ENCODE measurements at regions of chr6 and their contacts with region 1.

Region 1: GRCh38 chr6:106300944-106301343 is 24.6 kb downstream of the ATG5 start:
- DNase-seq: peak in 5 of 9 donors; percentile 4 to 22 (median 19)
- ATAC-seq: no peak
- H3K4me3 ChIP-seq: no peak overlapping the region
- H3K4me3 Mint-ChIP-seq: peak overlapping the region in 1 of 10 donors; percentile 10
- H3K27ac ChIP-seq: no peak overlapping the region
- H3K27ac Mint-ChIP-seq: no peak overlapping the region
- H3K4me1 ChIP-seq: no peaks in the 10 kb centered on the region
- H3K4me1 Mint-ChIP-seq: peaks cover 4 to 32% (median 12%) of the 10 kb centered on the region in 7 donors
- H3K27me3 ChIP-seq: no peaks in the 10 kb centered on the region
- H3K27me3 Mint-ChIP-seq: no peaks in the 10 kb centered on the region

Region 2: GRCh38 chr6:105087571-105088211 is 1213.3 kb before region 1 on chr6:
- CTCF ChIA-PET with region 1: no interaction called
- POLR2A ChIA-PET with region 1: no interaction called
- intact Hi-C with region 1: loop called (anchors 5 to 10 kb)
- DNase-seq: peak in 6 of 9 donors; percentile 11 to 43 (median 32)
- ATAC-seq: peak; percentile 67
- H3K4me3 ChIP-seq: no peak overlapping the region
- H3K4me3 Mint-ChIP-seq: no peak overlapping the region
- H3K27ac ChIP-seq: no peak overlapping the region
- H3K27ac Mint-ChIP-seq: no peak overlapping the region
- H3K4me1 ChIP-seq: no peaks in the 10 kb centered on the region
- H3K4me1 Mint-ChIP-seq: no peaks in the 10 kb centered on the region
- H3K27me3 ChIP-seq: no peaks in the 10 kb centered on the region
- H3K27me3 Mint-ChIP-seq: peaks cover 4 to 10% (median 6%) of the 10 kb centered on the region in 5 donors

Region 3: GRCh38 chr6:105431226-105431625 is 869.7 kb before region 1 on chr6:
- CTCF ChIA-PET with region 1: interaction called, 8 read pairs
- POLR2A ChIA-PET with region 1: no interaction called
- intact Hi-C with region 1: loop called (anchors 1 kb)
- DNase-seq: peak in 6 of 9 donors; percentile 4 to 43 (median 34)
- ATAC-seq: no peak
- H3K4me3 ChIP-seq: no peak overlapping the region
- H3K4me3 Mint-ChIP-seq: no peak overlapping the region
- H3K27ac ChIP-seq: no peak overlapping the region
- H3K27ac Mint-ChIP-seq: no peak overlapping the region
- H3K4me1 ChIP-seq: no peaks in the 10 kb centered on the region
- H3K4me1 Mint-ChIP-seq: peaks cover 0 to 3% (median 0%) of the 10 kb centered on the region in 7 donors
- H3K27me3 ChIP-seq: no peaks in the 10 kb centered on the region
- H3K27me3 Mint-ChIP-seq: peaks cover 0 to 36% (median 7%) of the 10 kb centered on the region in 5 donors

Region 4: DNA sequence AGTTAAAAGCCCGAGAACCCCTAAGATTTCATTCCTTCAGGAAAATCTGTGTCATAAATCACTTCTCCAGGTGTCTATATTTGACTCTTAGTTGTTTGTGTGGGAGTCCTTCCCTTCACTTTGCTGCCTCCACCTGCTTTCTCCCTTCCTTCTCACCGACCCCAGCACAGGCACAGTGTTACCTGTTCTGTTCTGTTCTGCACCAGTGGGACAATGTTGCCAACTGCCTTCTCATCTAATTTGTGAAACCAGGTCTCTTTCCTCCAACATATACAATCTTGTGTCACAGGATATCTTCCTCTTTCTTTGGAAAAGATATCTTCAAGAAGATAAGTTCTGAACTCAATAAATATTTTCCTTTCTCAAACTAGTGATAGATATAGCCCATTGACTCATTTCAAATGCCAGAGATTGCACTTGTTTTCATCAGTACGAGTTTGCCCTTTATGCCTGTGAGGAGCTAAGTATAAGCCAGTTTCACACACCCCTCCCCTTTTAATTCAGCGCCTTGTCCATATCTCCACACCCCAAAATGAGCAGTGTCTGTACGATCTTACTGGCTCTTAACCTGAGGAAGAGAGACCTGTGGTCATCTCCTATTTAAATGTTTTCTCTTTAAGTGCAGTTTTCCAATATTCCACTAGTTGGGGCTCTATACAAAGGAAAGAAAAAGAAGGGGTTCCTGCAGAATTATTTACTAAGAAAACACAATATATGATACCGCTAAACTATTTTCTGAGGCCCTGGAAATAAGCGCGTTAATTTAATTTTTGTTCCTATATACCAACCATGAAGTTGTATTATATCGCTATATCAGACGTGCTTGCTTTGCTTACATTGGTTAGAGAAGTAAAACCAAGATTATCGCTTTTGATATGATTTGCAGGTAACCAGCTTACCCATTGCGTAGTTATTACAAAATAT is 816.4 kb before region 1 on chr6:
- CTCF ChIA-PET with region 1: no interaction called
- POLR2A ChIA-PET with region 1: no interaction called
- intact Hi-C with region 1: loop called (anchors 1 kb)
- DNase-seq: peak in 5 of 9 donors; percentile 7 to 36 (median 20)
- ATAC-seq: peak; percentile 59
- H3K4me3 ChIP-seq: no peak overlapping the region
- H3K4me3 Mint-ChIP-seq: no peak overlapping the region
- H3K27ac ChIP-seq: no peak overlapping the region
- H3K27ac Mint-ChIP-seq: peak overlapping the region in 2 of 9 donors; percentile 20 to 52
- H3K4me1 ChIP-seq: peaks cover 0 to 35% of the 10 kb centered on the region in 2 donors
- H3K4me1 Mint-ChIP-seq: peaks cover 0 to 63% (median 0%) of the 10 kb centered on the region in 7 donors
- H3K27me3 ChIP-seq: no peaks in the 10 kb centered on the region
- H3K27me3 Mint-ChIP-seq: peaks cover 11 to 16% (median 13%) of the 10 kb centered on the region in 5 donors

Region 5: GRCh38 chr6:105733565-105734162 is 567.3 kb before region 1 on chr6:
- CTCF ChIA-PET with region 1: no interaction called
- POLR2A ChIA-PET with region 1: no interaction called
- intact Hi-C with region 1: loop called (anchors 1 to 2 kb)
- DNase-seq: peak in 6 of 9 donors; percentile 10 to 41 (median 34)
- ATAC-seq: no peak
- H3K4me3 ChIP-seq: no peak overlapping the region
- H3K4me3 Mint-ChIP-seq: no peak overlapping the region
- H3K27ac ChIP-seq: no peak overlapping the region
- H3K27ac Mint-ChIP-seq: no peak overlapping the region
- H3K4me1 ChIP-seq: no peaks in the 10 kb centered on the region
- H3K4me1 Mint-ChIP-seq: peaks cover 0 to 36% (median 8%) of the 10 kb centered on the region in 7 donors
- H3K27me3 ChIP-seq: no peaks in the 10 kb centered on the region
- H3K27me3 Mint-ChIP-seq: peaks cover 0 to 8% (median 0%) of the 10 kb centered on the region in 5 donors

Region 6: DNA sequence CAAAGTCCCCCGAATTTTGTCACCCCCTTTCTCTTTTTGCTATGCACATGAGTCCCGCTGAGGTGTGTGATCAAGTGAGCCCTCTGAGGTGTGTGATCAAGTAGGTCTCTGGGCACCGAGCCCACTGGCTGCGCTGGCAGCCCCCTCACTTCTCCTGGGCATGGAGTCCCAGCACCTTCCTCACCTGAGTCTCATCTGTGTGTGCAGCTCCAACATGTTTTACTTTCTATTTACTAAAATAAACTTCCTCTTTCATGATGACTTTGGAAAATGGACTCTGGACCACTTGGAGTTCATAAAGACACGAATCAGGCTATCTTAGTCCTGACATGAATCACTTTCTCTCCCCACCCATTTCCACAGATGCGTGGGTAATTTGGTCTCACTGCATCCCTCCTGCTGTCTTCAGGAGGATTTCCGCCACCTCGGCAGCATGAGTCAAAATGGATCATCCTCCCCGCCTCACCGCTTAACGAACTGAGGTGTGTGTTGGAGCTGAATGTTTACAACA is 175.0 kb before region 1 on chr6:
- CTCF ChIA-PET with region 1: no interaction called
- POLR2A ChIA-PET with region 1: no interaction called
- intact Hi-C with region 1: no loop called
- DNase-seq: peak in 1 of 9 donors; percentile 45
- ATAC-seq: peak; percentile 46
- H3K4me3 ChIP-seq: peak overlapping the region; percentile 19
- H3K4me3 Mint-ChIP-seq: peak overlapping the region in 1 of 10 donors; percentile 59
- H3K27ac ChIP-seq: no peak overlapping the region
- H3K27ac Mint-ChIP-seq: peak overlapping the region in 2 of 9 donors; percentile 18 to 84
- H3K4me1 ChIP-seq: peaks cover 0 to 8% of the 10 kb centered on the region in 2 donors
- H3K4me1 Mint-ChIP-seq: peaks cover 4 to 34% (median 14%) of the 10 kb centered on the region in 7 donors
- H3K27me3 ChIP-seq: no peaks in the 10 kb centered on the region
- H3K27me3 Mint-ChIP-seq: peaks cover 0 to 12% (median 0%) of the 10 kb centered on the region in 5 donors

Measured in naive thymus-derived CD4-positive, alpha-beta T cell (primary cell).